Activated T-helper 1 cell treated with anti-CD3 and anti-CD28 coated beads, Interleukin-12 subunit alpha, Interleukin-12 subunit beta, Interleukin-2, Interleukin-4 antibody, amounts not matched to agents 30 ng/mL and 10 ng/mL and 1 ng/mL, durations not matched to agents 14 hours and 24 hours and 36 hours (primary cell): ENCODE measurements at regions of chr1 and their contacts with region 1.

Region 1: GRCh38 chr1:16206547-16207317 is 5.7 kb downstream of the ARHGEF19 start:
- DNase-seq: peak; percentile 92
- H3K4me3 Mint-ChIP-seq: peak overlapping the region; percentile 83
- H3K27ac Mint-ChIP-seq: peak overlapping the region; percentile 97
- H3K4me1 Mint-ChIP-seq: no peaks in the 10 kb centered on the region
- H3K27me3 Mint-ChIP-seq: no peaks in the 10 kb centered on the region

Region 2: DNA sequence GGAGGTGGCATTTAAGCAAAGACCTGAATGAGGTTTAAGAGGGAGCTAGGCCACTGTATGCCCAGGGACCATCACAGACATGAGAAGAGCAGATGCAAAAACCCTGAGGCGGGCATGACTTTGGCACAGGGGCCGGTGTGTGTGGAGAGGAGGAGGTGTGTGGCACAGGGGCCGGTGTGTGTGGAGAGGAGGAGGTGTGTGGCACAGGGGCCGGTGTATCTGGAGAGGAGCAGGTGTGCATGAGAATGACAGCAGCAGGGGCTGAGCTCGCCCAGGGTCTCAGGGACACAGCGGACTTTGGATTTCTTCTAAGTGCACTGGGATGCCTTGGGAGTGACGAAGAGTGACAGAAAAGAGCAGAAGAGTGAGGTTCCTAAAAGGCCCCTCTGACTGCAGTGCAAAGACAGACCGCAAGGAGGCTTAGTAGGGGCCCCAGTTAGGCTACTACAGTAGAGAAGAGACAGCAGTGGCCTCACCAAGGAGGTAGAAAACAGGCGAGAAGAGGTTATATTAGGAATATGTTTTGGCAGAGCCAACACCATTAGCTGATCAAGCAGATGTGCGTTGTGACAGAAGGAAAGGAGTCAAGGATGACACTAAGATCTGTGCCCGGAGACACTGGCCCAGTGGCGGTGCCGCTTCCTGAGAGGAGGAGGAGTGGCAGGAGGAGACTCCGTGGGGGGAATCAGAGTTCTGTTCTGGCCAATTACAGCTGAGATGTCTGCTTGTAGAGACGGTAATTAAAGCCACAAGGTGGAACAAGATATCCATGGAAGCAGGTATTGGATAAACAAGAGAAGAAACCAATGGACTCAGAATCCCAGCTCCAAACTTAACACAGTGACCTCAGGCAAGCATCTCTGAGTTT is 249.3 kb before region 1 on chr1:
- intact Hi-C with region 1: no loop called
- DNase-seq: no peak
- H3K4me3 Mint-ChIP-seq: no peak overlapping the region
- H3K27ac Mint-ChIP-seq: peak overlapping the region; percentile 75
- H3K4me1 Mint-ChIP-seq: peaks cover 85% of the 10 kb centered on the region
- H3K27me3 Mint-ChIP-seq: no peaks in the 10 kb centered on the region

Region 3: DNA sequence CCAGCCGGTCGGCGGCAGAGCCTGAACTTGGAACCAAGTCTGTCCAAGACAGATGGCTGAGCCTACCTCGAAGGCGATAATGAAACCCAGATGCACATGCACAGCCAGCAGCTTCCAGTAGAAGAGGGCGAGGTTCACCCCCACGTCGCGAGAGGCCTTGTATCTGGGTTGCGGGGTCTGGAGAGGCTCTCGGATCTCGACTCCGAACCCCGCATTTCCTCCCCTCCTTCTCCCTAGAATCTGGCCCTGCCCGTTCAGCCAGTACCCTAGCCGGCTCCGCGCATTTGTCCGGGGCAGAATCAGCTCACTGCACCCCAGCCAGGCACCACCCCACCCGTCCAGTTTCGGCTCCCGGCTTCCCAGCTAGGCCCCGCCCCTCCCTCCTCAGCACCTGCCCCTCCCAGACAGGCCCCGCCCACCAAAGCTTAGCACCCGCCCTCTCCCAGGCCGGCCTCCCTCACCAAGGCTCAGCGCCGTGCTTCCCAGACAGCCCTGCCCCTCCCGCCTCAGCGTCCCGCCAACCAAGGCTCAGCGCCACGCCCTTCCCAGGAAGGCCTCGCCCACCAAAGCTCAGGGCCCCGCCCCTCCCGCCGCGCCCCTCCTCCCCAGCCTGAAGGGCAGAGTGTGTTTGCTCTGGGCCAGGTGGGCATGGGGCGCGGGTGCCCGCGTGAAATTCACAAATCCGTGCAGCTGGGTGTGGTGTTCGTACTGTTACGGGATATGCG is 10.5 kb after region 1 on chr1:
- intact Hi-C with region 1: loop called (anchors 1 kb)
- DNase-seq: peak; percentile 92
- H3K4me3 Mint-ChIP-seq: peak overlapping the region; percentile 83
- H3K27ac Mint-ChIP-seq: no peak overlapping the region
- H3K4me1 Mint-ChIP-seq: peaks cover 22% of the 10 kb centered on the region
- H3K27me3 Mint-ChIP-seq: peaks cover 4% of the 10 kb centered on the region

Region 4: GRCh38 chr1:16236511-16237342 is 30.0 kb after region 1 on chr1 and contains the start of gene CPLANE2:
- intact Hi-C with region 1: loop called (anchors 1 kb)
- DNase-seq: peak; percentile 96
- H3K4me3 Mint-ChIP-seq: peak within 1 kb of the TSS; percentile 83
- H3K27ac Mint-ChIP-seq: peak within 1 kb of the TSS; percentile 87
- H3K4me1 Mint-ChIP-seq: peaks cover 26% of the 10 kb centered on the region
- H3K27me3 Mint-ChIP-seq: no peaks in the 10 kb centered on the region
- total RNA-seq, gene CPLANE2: 3.8 and 4.1 TPM in 2 replicates

Region 5: DNA sequence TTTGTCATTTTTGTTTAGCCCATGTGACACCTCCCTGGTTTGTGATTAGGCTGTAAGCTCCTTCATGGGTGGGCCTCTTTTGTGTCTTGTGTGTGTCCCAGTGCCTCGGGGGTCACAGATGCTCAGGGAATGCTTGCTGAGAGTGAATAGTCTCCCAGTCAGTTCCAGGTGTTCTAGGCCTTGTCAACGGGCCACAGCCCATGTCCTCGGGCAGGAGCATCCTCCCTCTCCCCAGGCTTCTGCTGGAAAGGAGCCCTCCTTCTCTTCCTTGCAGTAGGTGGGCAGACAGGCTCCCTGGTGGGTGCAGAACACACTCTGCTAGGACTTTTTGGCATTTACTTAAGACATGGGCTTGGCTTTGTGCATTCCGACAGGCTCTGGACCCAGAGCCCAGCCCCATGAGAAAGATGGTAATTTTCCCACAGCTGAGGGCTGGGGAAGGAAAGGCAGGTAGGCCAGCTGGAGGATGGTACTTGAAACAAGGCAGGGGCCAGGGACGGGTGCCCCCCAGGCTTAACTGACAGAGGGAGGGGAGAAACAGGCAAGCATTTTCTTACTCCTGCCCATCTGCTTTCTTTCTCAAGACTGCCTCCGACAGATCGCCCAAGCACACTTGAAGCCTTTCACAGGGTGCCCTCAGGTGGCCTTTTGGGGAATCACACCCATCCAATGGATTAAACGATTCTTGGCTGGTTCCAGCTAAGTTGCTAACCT is 37.4 kb after region 1 on chr1:
- intact Hi-C with region 1: loop called (anchors 1 kb)
- DNase-seq: peak; percentile 64
- H3K4me3 Mint-ChIP-seq: no peak overlapping the region
- H3K27ac Mint-ChIP-seq: no peak overlapping the region
- H3K4me1 Mint-ChIP-seq: peaks cover 10% of the 10 kb centered on the region
- H3K27me3 Mint-ChIP-seq: no peaks in the 10 kb centered on the region

Region 6: DNA sequence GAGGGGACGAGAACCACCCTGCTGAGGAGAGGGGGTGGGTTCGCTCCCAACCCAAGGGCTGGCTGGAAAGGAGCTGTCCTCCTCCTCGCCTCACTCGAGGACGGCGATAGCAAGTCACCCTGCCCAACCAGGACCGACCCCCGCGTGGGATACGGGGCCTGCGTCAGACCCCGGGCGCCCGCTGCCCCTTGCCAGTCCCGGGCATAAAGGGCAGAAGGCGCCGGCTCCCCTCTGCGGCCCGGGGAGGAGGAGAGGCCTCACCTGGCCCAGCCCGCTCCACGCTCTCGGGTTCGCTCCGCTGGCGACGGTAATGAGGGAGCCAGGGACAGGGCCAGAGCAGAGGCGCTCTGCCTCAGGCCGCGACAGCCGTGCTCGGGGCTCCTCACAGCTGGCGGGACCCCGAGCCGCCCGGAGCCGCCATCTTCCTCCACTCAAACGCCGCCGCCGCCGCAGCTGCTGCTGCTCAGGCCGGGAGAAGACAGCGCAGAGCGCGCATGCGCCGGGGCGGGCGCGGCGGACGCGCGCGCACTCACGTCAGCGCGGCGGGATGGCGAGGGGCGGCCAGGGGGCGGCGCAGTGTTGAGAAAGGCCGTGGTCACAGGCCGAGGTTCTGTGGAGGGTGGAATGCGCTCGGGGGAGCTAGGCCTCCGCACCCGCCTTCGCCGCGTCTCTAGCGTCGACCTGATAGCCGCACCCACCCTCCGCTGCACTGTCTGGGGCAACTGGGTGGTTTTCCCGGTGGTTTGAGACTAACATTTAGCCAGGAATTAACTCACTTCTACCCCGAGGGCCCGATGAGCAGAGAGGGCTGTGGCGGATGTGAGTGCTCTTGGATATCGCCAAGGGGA is 145.5 kb after region 1 on chr1 and contains the start of gene FBXO42:
- intact Hi-C with region 1: loop called (anchors 1 kb)
- DNase-seq: peak; percentile 94
- H3K4me3 Mint-ChIP-seq: peak within 1 kb of the TSS; percentile 97
- H3K27ac Mint-ChIP-seq: peak within 1 kb of the TSS; percentile 88
- H3K4me1 Mint-ChIP-seq: peaks cover 29% of the 10 kb centered on the region
- H3K27me3 Mint-ChIP-seq: no peaks in the 10 kb centered on the region
- total RNA-seq, gene FBXO42: 17.1 and 19.1 TPM in 2 replicates

Region 7: GRCh38 chr1:16498573-16499413 is 292.1 kb after region 1 on chr1:
- intact Hi-C with region 1: loop called (anchors 5 kb)
- DNase-seq: peak; percentile 85
- H3K4me3 Mint-ChIP-seq: peak overlapping the region; percentile 83
- H3K27ac Mint-ChIP-seq: peak overlapping the region; percentile 67
- H3K4me1 Mint-ChIP-seq: peaks cover 8% of the 10 kb centered on the region
- H3K27me3 Mint-ChIP-seq: peaks cover 11% of the 10 kb centered on the region